Activated CD4-positive, alpha-beta T cell treated with anti-CD3 and anti-CD28 coated beads for 36 hours (primary cell): ENCODE measurements at regions of chr4 and their contacts with region 1.

Region 1: GRCh38 chr4:154164931-154165839 is 326.4 kb downstream of the DCHS2 start:
- DNase-seq: peak; percentile 64
- ATAC-seq: peak; percentile 92
- H3K4me3 Mint-ChIP-seq: peak overlapping the region; percentile 1
- H3K27ac Mint-ChIP-seq: peak overlapping the region; percentile 47
- H3K4me1 Mint-ChIP-seq: peaks cover 24% of the 10 kb centered on the region
- H3K27me3 Mint-ChIP-seq: peaks cover 22% of the 10 kb centered on the region

Region 2: DNA sequence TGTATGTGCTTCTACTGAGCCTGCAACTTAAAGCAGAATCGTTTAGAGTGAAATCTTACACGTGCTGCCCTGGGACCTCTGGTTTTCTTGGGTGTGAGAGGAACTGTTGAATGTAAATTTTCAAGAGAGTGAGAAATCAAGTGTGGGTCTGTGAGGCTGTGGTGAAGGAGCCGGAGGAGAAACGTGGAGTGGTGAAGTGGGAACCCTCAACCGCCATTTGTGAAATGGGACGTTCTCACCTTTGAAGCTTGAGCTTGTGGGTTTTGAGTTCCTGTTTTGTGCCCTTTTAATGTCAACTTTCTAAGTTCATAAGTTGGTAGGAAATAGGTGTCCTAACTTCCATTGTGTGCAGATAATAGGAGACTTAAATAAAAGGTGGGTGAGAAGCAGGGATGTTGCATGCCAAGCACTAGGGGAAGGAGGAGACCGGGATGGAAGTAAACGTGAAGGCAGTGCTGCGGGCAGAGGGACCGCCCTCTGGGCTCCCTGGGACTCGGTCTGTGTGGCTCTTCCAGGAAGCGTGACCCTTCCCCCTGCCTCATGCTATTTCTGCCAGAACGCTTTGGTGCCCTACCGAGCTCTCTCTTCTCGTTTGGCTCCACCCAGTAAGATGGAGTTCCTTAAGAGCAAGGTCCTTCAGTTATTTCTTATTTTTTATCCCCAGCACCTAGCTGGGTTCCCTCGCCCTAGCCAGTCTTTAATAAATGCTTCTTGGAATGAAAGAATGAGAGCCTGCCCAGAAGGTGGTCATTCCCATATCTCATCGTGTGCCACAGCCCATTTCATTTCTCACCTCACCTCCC is 643.0 kb before region 1 on chr4:
- CTCF ChIA-PET with region 1: no interaction called
- POLR2A ChIA-PET with region 1: no interaction called
- intact Hi-C with region 1: loop called in 1 of 2 experiments (anchors 10 kb)
- DNase-seq: peak; percentile 83
- ATAC-seq: peak; percentile 79
- H3K4me3 Mint-ChIP-seq: peak overlapping the region; percentile 61
- H3K27ac Mint-ChIP-seq: peak overlapping the region; percentile 98
- H3K4me1 Mint-ChIP-seq: peaks cover 95% of the 10 kb centered on the region
- H3K27me3 Mint-ChIP-seq: no peaks in the 10 kb centered on the region

Region 3: GRCh38 chr4:153809307-153809706 is 355.9 kb before region 1 on chr4:
- CTCF ChIA-PET with region 1: no interaction called
- POLR2A ChIA-PET with region 1: no interaction called
- intact Hi-C with region 1: loop called (anchors 1 kb)
- DNase-seq: peak; percentile 55
- ATAC-seq: peak; percentile 96
- H3K4me3 Mint-ChIP-seq: no peak overlapping the region
- H3K27ac Mint-ChIP-seq: peak overlapping the region; percentile 16
- H3K4me1 Mint-ChIP-seq: peaks cover 19% of the 10 kb centered on the region
- H3K27me3 Mint-ChIP-seq: peaks cover 4% of the 10 kb centered on the region

Region 4: GRCh38 chr4:154073107-154073822 is 91.9 kb before region 1 on chr4:
- CTCF ChIA-PET with region 1: no interaction called
- POLR2A ChIA-PET with region 1: no interaction called
- intact Hi-C with region 1: loop called in 1 of 2 experiments (anchors 1 kb)
- DNase-seq: peak; percentile 40
- ATAC-seq: peak; percentile 94
- H3K4me3 Mint-ChIP-seq: no peak overlapping the region
- H3K27ac Mint-ChIP-seq: no peak overlapping the region
- H3K4me1 Mint-ChIP-seq: peaks cover 14% of the 10 kb centered on the region
- H3K27me3 Mint-ChIP-seq: peaks cover 8% of the 10 kb centered on the region